ENCODE measurements at regions of chr2 and their contacts with region 1.

Region 1: GRCh38 chr2:65366595-65367125 is 65.7 kb downstream of the SPRED2 start:
- DNase-seq: peak; percentile 97
- ATAC-seq: peak; percentile 91
- H3K4me3 ChIP-seq: peak overlapping the region; percentile 36 to 50
- H3K27ac ChIP-seq: peak overlapping the region; percentile 88
- H3K4me1 ChIP-seq: peaks cover 93% of the 10 kb centered on the region
- H3K27me3 ChIP-seq: no peaks in the 10 kb centered on the region
- CTCF ChIP-seq: no peak

Region 2: GRCh38 chr2:64807417-64807816 is 559.2 kb before region 1 on chr2:
- CTCF ChIA-PET with region 1: no interaction called
- POLR2A ChIA-PET with region 1: no interaction called
- in situ Hi-C with region 1: no loop called
- intact Hi-C with region 1: no loop called
- DNase-seq: no peak
- ATAC-seq: peak; percentile 78
- H3K4me3 ChIP-seq: no peak overlapping the region
- H3K27ac ChIP-seq: no peak overlapping the region
- H3K4me1 ChIP-seq: no peaks in the 10 kb centered on the region
- H3K27me3 ChIP-seq: no peaks in the 10 kb centered on the region
- CTCF ChIP-seq: no peak

Region 3: DNA sequence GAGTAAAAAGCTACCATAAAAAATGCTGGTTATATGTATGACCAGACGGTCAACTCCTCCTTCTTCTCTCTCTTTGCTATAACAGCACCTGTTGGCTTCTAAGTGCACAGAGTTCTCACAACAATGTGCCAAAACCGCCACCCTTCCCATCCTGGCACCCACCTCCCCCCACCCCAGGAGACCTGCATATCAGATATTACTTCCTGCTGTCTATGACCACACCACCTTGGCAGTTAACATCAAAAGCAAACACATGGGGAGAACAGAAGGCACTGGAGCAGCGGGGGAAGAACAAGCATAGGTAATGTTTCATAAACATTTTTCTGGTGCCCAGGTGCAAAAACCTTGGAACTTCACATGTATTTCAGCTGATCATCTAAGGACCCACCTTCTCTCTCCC is 50.3 kb after region 1 on chr2:
- CTCF ChIA-PET with region 1: no interaction called
- POLR2A ChIA-PET with region 1: no interaction called
- in situ Hi-C with region 1: no loop called
- intact Hi-C with region 1: loop called (anchors 10 kb)
- DNase-seq: no peak
- ATAC-seq: no peak
- H3K4me3 ChIP-seq: no peak overlapping the region
- H3K27ac ChIP-seq: 0 out of 2 replicates have a peak overlapping the region, but pooled peaks have one; percentile 25
- H3K4me1 ChIP-seq: peaks cover 77% of the 10 kb centered on the region
- H3K27me3 ChIP-seq: no peaks in the 10 kb centered on the region
- CTCF ChIP-seq: no peak

Region 4: DNA sequence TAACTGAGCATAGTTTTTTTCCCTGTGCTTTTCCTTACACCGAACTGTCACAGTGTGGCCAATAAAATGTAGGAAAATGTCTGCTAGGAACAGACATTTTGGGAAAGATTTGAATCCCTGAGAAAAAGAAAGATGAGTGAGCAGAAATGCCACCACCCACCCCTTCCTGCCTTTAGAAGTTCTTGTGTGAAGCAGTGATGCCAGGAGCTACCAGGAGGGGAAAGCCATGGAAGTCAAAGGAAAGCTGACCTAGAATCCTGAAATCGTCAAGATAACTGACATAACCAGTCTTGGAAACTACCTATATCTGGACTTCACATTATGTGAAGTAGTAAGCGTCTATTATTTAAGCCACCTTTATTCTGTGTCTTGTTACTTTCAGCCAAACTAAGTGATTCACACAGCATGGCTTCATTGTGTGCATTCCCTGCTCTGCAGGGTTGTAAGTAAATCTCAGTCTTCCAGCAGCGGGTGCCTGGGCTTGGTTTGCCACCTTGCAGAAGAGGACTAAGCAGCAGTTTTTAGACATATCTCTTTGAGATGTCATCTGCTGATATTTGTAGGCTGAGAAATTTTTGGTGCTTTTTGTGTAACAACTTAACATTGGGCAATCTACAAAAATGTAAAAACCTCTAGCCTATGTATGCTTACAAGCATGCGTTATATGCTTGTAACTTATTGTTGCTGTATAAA is 77.0 kb after region 1 on chr2:
- CTCF ChIA-PET with region 1: no interaction called
- POLR2A ChIA-PET with region 1: interaction called, 13 read pairs
- in situ Hi-C with region 1: no loop called
- intact Hi-C with region 1: no loop called
- DNase-seq: no peak
- ATAC-seq: no peak
- H3K4me3 ChIP-seq: no peak overlapping the region
- H3K27ac ChIP-seq: no peak overlapping the region
- H3K4me1 ChIP-seq: no peaks in the 10 kb centered on the region
- H3K27me3 ChIP-seq: no peaks in the 10 kb centered on the region
- CTCF ChIP-seq: no peak

Measured in Panc1 (cell line).